ENCODE measurements at regions of chr19 and their contacts with region 1.

Region 1: GRCh38 chr19:1605236-1606137 is at the start of gene UQCR11:
- DNase-seq: peak; percentile 92
- ATAC-seq: peak; percentile 83
- H3K4me3 Mint-ChIP-seq: peak within 1 kb of the TSS; percentile 91
- H3K27ac Mint-ChIP-seq: peak within 1 kb of the TSS; percentile 99
- H3K4me1 Mint-ChIP-seq: peaks cover 36% of the 10 kb centered on the region
- H3K27me3 Mint-ChIP-seq: no peaks in the 10 kb centered on the region
- total RNA-seq, gene UQCR11: 176 to 181 TPM

Region 2: GRCh38 chr19:1592755-1593500 is 12.6 kb before region 1 on chr19 and contains the start of gene MBD3:
- POLR2A ChIA-PET with region 1: interaction called, 56 read pairs
- DNase-seq: peak; percentile 95
- ATAC-seq: peak; percentile 80
- H3K4me3 Mint-ChIP-seq: peak within 1 kb of the TSS; percentile 95
- H3K27ac Mint-ChIP-seq: peak within 1 kb of the TSS; percentile 93
- H3K4me1 Mint-ChIP-seq: peaks cover 14% of the 10 kb centered on the region
- H3K27me3 Mint-ChIP-seq: no peaks in the 10 kb centered on the region
- total RNA-seq, gene MBD3: 68.9 to 72.7 TPM

Region 3: DNA sequence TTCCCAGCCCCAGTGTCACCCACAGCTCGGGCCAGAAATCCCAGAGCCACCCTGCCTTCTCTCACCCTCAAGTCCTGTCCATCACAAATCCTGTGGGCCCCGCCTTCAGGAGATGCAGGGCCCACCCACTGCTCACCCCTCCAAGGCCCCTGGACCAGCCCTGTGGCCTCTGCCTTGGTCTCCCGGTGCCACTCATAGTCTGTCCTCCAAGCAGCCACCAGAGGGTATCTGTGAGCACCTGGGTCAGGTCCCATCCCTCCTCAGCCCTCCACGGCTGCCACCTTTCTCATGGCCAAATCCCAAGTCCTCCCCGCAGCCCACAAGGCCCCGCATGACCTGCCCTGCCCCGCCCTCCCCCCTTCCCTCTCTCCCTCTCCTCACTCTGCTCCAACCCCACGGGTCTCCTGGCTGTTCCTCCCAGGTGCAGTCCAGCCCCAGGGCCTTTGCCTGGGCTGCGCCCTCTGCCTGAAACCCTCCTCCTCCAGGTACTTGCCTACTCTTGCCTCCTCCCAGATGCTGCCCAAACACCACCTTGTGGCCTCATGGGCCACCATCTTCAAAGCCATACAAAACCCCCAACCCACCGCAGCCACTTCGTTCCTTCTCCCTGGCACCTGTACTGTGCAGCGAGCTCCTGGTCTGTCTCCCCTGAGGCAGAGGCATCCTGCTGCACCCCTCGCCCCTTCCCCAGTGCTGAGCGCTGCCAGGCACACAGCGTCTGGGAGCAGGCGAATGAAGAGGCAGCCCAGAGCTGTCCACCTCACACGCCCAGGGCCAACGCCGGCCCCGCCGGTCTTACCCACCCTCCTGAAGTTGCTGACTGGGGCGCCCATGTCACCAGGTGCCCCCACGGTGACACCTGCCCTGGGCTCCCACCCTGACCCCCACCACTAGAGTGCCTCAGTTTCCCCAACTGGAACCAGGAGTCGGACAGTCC is 12.9 kb after region 1 on chr19:
- POLR2A ChIA-PET with region 1: no interaction called
- DNase-seq: no peak
- ATAC-seq: peak; percentile 58
- H3K4me3 Mint-ChIP-seq: no peak overlapping the region
- H3K27ac Mint-ChIP-seq: peak overlapping the region; percentile 58
- H3K4me1 Mint-ChIP-seq: peaks cover 10% of the 10 kb centered on the region
- H3K27me3 Mint-ChIP-seq: no peaks in the 10 kb centered on the region

Region 4: GRCh38 chr19:1632462-1633268 is 27.2 kb after region 1 on chr19:
- POLR2A ChIA-PET with region 1: no interaction called
- DNase-seq: no peak
- ATAC-seq: no peak
- H3K4me3 Mint-ChIP-seq: no peak overlapping the region
- H3K27ac Mint-ChIP-seq: peak overlapping the region; percentile 33
- H3K4me1 Mint-ChIP-seq: no peaks in the 10 kb centered on the region
- H3K27me3 Mint-ChIP-seq: no peaks in the 10 kb centered on the region

Region 5: GRCh38 chr19:1652471-1653299 is 47.2 kb after region 1 on chr19 and contains the start of gene TCF3:
- POLR2A ChIA-PET with region 1: interaction called, 12 read pairs
- DNase-seq: peak; percentile 99
- ATAC-seq: peak; percentile 87
- H3K4me3 Mint-ChIP-seq: peak within 1 kb of the TSS; percentile 83
- H3K27ac Mint-ChIP-seq: peak within 1 kb of the TSS; percentile 95
- H3K4me1 Mint-ChIP-seq: peaks cover 11% of the 10 kb centered on the region
- H3K27me3 Mint-ChIP-seq: peaks cover 2% of the 10 kb centered on the region
- total RNA-seq, gene TCF3: 102 to 109 TPM